Activated CD4-positive, alpha-beta T cell treated with anti-CD3 and anti-CD28 coated beads for 36 hours (primary cell): ENCODE measurements at regions of chr1 and their contacts with region 1.

Region 1: GRCh38 chr1:198651650-198652400 is 13.0 kb downstream of the PTPRC start:
- DNase-seq: no peak
- ATAC-seq: no peak
- H3K4me3 Mint-ChIP-seq: peak overlapping the region; percentile 72
- H3K27ac Mint-ChIP-seq: peak overlapping the region; percentile 97
- H3K4me1 Mint-ChIP-seq: peaks cover 73% of the 10 kb centered on the region
- H3K27me3 Mint-ChIP-seq: no peaks in the 10 kb centered on the region

Region 2: GRCh38 chr1:198612471-198613260 is 39.2 kb before region 1 on chr1:
- CTCF ChIA-PET with region 1: interaction called, 3 read pairs
- POLR2A ChIA-PET with region 1: interaction called, 3 read pairs
- intact Hi-C with region 1: loop called in 1 of 2 experiments (anchors 5 kb)
- DNase-seq: no peak
- ATAC-seq: peak; percentile 48
- H3K4me3 Mint-ChIP-seq: peak overlapping the region; percentile 77
- H3K27ac Mint-ChIP-seq: peak overlapping the region; percentile 99
- H3K4me1 Mint-ChIP-seq: peaks cover 83% of the 10 kb centered on the region
- H3K27me3 Mint-ChIP-seq: no peaks in the 10 kb centered on the region

Region 3: GRCh38 chr1:198669023-198669698 is 17.3 kb after region 1 on chr1:
- CTCF ChIA-PET with region 1: interaction called, 12 read pairs
- POLR2A ChIA-PET with region 1: interaction called, 3 read pairs
- intact Hi-C with region 1: loop called in 1 of 2 experiments (anchors 1 kb)
- DNase-seq: peak; percentile 57
- ATAC-seq: peak; percentile 85
- H3K4me3 Mint-ChIP-seq: peak overlapping the region; percentile 34
- H3K27ac Mint-ChIP-seq: peak overlapping the region; percentile 77
- H3K4me1 Mint-ChIP-seq: peaks cover 90% of the 10 kb centered on the region
- H3K27me3 Mint-ChIP-seq: no peaks in the 10 kb centered on the region